Psoas muscle (tissue), 8 donors: ENCODE measurements at regions of chr12 and their contacts with region 1.

Region 1: GRCh38 chr12:69949311-69950002 is 124.4 kb downstream of the MYRFL start:
- DNase-seq: peak in 1 of 2 donors; percentile 17
- ATAC-seq: no peak
- H3K4me3 ChIP-seq: no peak overlapping the region
- H3K27ac ChIP-seq: no peak overlapping the region
- H3K4me1 ChIP-seq: no peaks in the 10 kb centered on the region
- H3K27me3 ChIP-seq: no peaks in the 10 kb centered on the region
- CTCF ChIP-seq: no peak

Region 2: GRCh38 chr12:69932676-69933552 is 16.5 kb before region 1 on chr12:
- intact Hi-C with region 1: loop called in 1 of 2 experiments (anchors 1 kb)
- DNase-seq: no peak
- ATAC-seq: no peak
- H3K4me3 ChIP-seq: no peak overlapping the region
- H3K27ac ChIP-seq: no peak overlapping the region
- H3K4me1 ChIP-seq: no peaks in the 10 kb centered on the region
- H3K27me3 ChIP-seq: no peaks in the 10 kb centered on the region
- CTCF ChIP-seq: no peak